ENCODE measurements at regions of chr14 and their contacts with region 1.

Region 1: GRCh38 chr14:105351920-105352851 is 37.6 kb downstream of the PACS2 start:
- DNase-seq: peak; percentile 90
- ATAC-seq: peak; percentile 90
- H3K4me3 Mint-ChIP-seq: no peak overlapping the region
- H3K27ac Mint-ChIP-seq: peak overlapping the region; percentile 84; the same call in 1 of the 2 replicates
- H3K4me1 Mint-ChIP-seq: peaks cover 7% of the 10 kb centered on the region; the same call in 1 of the 2 replicates
- H3K27me3 Mint-ChIP-seq: no peaks in the 10 kb centered on the region
- CTCF ChIP-seq: peak; percentile 79

Region 2: DNA sequence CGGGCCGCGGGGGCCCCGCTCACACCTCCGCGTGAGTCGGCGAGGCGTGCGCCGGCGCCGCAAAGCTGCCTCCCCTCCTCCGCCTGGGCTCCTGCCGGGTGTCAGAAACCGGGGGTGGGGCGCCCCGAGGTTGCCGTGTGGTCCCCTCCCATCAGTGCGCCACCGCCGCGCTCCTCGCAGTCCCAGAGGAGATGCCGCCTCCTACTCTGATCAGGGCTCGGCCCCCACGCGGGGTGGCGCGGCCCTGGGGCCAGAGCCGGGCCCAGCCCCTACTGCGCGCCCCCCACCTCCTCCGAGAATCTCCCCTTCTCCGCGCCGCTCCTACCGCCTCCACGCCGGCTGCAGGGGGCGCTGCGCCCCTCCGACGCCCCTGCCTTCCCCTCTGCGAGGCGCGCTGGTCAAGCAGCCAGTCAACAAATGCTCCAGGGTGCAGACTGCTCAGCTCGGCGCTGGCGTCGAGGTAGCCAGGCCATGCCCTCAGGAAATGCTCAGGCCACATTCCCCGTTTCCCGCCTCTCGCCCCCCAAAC is 183.1 kb before region 1 on chr14:
- CTCF ChIA-PET with region 1: interaction called, 11 read pairs
- POLR2A ChIA-PET with region 1: no interaction called
- DNase-seq: peak; percentile 76
- ATAC-seq: peak; percentile 68
- H3K4me3 Mint-ChIP-seq: peak overlapping the region; percentile 63
- H3K27ac Mint-ChIP-seq: no peak overlapping the region
- H3K4me1 Mint-ChIP-seq: no peaks in the 10 kb centered on the region
- H3K27me3 Mint-ChIP-seq: peaks cover 15% of the 10 kb centered on the region
- CTCF ChIP-seq: peak; percentile 73

Region 3: GRCh38 chr14:105203057-105203531 is 149.1 kb before region 1 on chr14:
- CTCF ChIA-PET with region 1: interaction called, 19 read pairs
- POLR2A ChIA-PET with region 1: no interaction called
- DNase-seq: peak; percentile 86
- ATAC-seq: peak; percentile 60
- H3K4me3 Mint-ChIP-seq: no peak overlapping the region
- H3K27ac Mint-ChIP-seq: no peak overlapping the region
- H3K4me1 Mint-ChIP-seq: no peaks in the 10 kb centered on the region
- H3K27me3 Mint-ChIP-seq: peaks cover 11% of the 10 kb centered on the region
- CTCF ChIP-seq: peak; percentile 95

Region 4: DNA sequence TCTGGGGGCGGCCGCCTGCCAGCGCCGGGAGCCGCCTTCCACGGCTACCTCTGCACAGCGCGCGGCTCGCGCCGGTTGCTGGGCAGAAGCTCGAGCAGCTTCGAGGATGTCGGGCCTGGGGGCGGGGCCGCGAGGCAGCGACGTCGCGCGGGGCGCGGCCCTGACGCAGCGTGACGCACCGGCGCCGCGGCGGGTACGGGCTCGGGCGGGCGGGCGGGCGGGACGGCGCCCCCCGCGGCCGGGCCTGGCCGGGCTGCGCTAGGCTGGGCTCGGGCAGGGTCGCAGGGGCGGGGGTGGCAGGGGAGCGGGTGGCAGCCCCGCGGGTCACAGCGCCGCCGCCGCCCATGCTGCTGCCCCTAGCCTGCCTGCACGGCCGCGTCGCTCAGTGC is 103.8 kb before region 1 on chr14 and contains the start of gene BTBD6:
- CTCF ChIA-PET with region 1: interaction called, 10 read pairs
- POLR2A ChIA-PET with region 1: no interaction called
- DNase-seq: peak; percentile 73
- ATAC-seq: peak; percentile 80
- H3K4me3 Mint-ChIP-seq: peak within 1 kb of the TSS; percentile 75
- H3K27ac Mint-ChIP-seq: peak within 1 kb of the TSS; percentile 72; the same call in 1 of the 2 replicates
- H3K4me1 Mint-ChIP-seq: peaks cover 5% of the 10 kb centered on the region
- H3K27me3 Mint-ChIP-seq: no peaks in the 10 kb centered on the region; the same call in 1 of the 2 replicates
- CTCF ChIP-seq: no peak
- total RNA-seq, gene BTBD6: 7.8 to 10.0 TPM (median 8.3 TPM) in 3 replicates

Region 5: DNA sequence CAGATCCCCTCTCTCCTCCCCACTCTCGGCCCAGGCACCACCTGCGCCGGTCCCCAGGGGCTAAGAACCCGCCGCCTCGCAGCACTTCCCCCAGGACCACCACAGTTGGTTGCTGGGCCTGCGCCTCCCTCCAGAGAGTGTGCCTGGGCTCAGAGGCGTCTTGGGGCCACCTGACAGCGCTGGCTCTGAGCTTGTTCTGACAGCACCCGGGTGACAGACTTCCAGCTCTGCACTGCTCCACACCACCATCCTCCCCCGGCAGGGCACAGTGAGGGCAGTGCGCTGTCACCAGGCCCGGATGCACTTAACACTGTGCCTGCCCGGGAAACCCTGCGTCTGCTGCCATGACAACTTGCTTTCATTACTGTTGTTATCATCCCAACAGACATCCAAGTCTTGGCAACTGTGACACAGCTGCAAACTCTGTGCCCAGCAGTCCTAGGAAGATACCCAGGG is 58.0 kb before region 1 on chr14:
- CTCF ChIA-PET with region 1: interaction called, 13 read pairs
- POLR2A ChIA-PET with region 1: no interaction called
- DNase-seq: no peak
- ATAC-seq: no peak
- H3K4me3 Mint-ChIP-seq: no peak overlapping the region
- H3K27ac Mint-ChIP-seq: peak overlapping the region; percentile 67
- H3K4me1 Mint-ChIP-seq: no peaks in the 10 kb centered on the region
- H3K27me3 Mint-ChIP-seq: peaks cover 6% of the 10 kb centered on the region
- CTCF ChIP-seq: no peak

Region 6: GRCh38 chr14:105333613-105334364 is 18.4 kb before region 1 on chr14:
- CTCF ChIA-PET with region 1: interaction called, 15 read pairs
- POLR2A ChIA-PET with region 1: no interaction called
- DNase-seq: no peak
- ATAC-seq: no peak
- H3K4me3 Mint-ChIP-seq: no peak overlapping the region
- H3K27ac Mint-ChIP-seq: no peak overlapping the region
- H3K4me1 Mint-ChIP-seq: peaks cover 23% of the 10 kb centered on the region
- H3K27me3 Mint-ChIP-seq: no peaks in the 10 kb centered on the region
- CTCF ChIP-seq: no peak

Region 7: DNA sequence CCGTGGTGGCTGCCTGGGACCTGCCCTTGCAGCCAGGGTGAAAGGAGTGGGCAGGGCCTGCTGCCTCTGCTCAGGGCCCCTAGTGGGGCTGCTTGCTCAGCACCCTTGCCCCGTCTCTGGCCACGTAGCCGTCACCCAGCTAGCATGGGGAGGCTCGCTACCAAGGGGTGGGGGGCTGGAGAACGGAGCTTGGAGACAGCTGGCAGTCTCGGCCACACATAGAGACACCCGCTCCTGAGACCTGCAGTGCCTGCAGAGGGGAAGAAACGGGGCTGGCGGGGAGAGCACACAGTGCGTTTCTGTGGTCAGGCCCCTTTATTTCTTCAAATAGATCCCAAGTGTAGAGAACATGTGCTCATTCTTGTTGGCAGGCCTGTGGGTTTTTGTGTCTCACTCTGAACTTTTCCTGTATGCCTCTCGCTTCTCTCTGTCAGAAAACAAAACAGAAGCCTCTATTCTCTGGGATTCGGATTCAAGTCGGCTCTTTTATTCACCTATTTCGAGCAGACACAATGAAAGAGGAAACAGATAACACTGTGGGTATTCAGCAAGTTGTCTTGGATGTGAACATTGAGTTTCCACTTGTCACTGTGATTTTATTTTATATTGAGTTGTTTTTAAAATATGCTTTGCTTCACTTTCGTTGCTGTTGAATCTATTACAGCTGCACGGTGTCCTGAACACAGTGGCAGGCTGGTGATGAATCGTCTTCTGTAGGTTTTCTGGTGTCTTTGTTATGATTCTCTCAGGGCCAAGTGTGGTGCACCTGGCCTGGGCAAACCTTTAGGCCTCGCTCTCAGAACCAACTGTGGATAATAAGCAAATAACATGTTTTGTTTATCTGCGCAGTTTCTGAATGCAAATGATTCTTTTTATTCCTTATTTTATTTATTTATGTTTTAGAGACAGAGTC is 11.1 kb before region 1 on chr14:
- CTCF ChIA-PET with region 1: interaction called, 27 read pairs
- POLR2A ChIA-PET with region 1: no interaction called
- DNase-seq: no peak
- ATAC-seq: no peak
- H3K4me3 Mint-ChIP-seq: no peak overlapping the region
- H3K27ac Mint-ChIP-seq: no peak overlapping the region
- H3K4me1 Mint-ChIP-seq: peaks cover 12% of the 10 kb centered on the region
- H3K27me3 Mint-ChIP-seq: no peaks in the 10 kb centered on the region; the same call in 1 of the 2 replicates
- CTCF ChIP-seq: no peak